Dorsolateral prefrontal cortex (tissue), 120 donors: ENCODE measurements at regions of chr9 and their contacts with region 1.

Region 1: GRCh38 chr9:92547356-92547755 is 11.6 kb upstream of the ECM2 start:
- DNase-seq: no peak
- H3K4me3 ChIP-seq: no peak overlapping the region
- H3K27ac ChIP-seq: no peak overlapping the region
- H3K27me3 ChIP-seq: no peaks in the 10 kb centered on the region
- CTCF ChIP-seq: no peak

Region 2: GRCh38 chr9:92607773-92608172 is 60.4 kb after region 1 on chr9:
- intact Hi-C with region 1: loop called in 1 of 2 experiments (anchors 10 kb)
- DNase-seq: no peak
- H3K4me3 ChIP-seq: no peak overlapping the region
- H3K27ac ChIP-seq: peak overlapping the region in 38 of 59 donors; percentile 22 to 88 (median 68)
- H3K27me3 ChIP-seq: no peaks in the 10 kb centered on the region
- CTCF ChIP-seq: no peak